Activated B cell treated with CpG ODN at 0.5 μM for 24 hours (primary cell): ENCODE measurements at regions of chr3 and their contacts with region 1.

Region 1: DNA sequence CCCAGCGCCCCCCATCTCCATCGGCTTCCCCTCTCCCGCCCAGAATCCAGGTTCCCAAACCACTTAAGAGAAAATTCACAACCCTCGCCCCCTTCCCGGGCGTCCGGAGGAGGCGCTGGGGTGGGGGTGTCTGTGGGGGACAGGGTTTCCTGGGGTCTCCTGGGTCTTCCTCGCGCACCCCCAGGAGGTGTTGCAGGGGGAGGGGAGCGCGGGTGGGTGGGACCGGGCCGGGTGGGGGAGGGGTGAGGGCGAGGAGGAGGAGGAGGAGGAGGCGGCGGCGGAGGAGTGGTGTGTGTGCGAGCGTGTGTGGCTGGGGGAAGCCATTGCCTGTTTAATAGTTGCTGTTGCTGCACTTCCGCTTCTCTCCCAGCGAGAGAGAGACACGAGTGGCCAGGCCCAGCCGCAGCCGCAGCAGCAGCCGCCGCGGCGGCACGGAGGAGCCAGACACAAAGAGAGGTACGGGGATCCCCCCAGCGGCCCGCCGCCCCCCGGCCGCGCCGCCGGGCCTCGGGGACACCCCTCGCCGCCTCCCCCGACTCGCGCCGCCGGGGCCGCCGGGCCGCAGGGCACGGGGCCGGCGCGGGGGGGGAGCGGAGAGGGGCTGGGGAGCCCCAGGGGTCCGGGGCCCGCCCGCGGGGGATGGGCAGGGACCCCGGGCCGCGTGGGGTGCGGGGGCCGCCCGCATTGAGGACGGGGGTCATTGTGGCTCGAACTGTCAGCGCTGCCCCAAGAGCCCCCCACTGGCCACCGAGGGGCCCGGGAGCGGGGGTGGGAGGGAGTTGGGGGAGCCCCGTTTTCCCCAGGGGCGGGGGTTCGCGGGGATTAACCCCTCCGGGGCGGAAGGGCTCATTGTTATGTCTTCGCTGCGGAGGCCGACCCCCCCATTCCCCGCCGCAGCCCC is at the start of gene UBE2E1:
- DNase-seq: peak; percentile 68
- ATAC-seq: peak; percentile 77
- H3K4me3 Mint-ChIP-seq: peak within 1 kb of the TSS; percentile 97
- H3K27ac Mint-ChIP-seq: peak within 1 kb of the TSS; percentile 97
- H3K4me1 Mint-ChIP-seq: peaks cover 41% of the 10 kb centered on the region
- H3K27me3 Mint-ChIP-seq: no peaks in the 10 kb centered on the region
- CTCF ChIP-seq: no peak
- total RNA-seq, gene UBE2E1: 79.9 and 85.2 TPM in 2 replicates

Region 2: GRCh38 chr3:22887664-22888291 is 918.1 kb before region 1 on chr3:
- CTCF ChIA-PET with region 1: no interaction called
- POLR2A ChIA-PET with region 1: no interaction called
- intact Hi-C with region 1: no loop called
- DNase-seq: no peak
- ATAC-seq: no peak
- H3K4me3 Mint-ChIP-seq: no peak overlapping the region
- H3K27ac Mint-ChIP-seq: no peak overlapping the region
- H3K4me1 Mint-ChIP-seq: no peaks in the 10 kb centered on the region
- H3K27me3 Mint-ChIP-seq: peaks cover 19% of the 10 kb centered on the region
- CTCF ChIP-seq: no peak

Region 3: GRCh38 chr3:23377928-23378672 is 427.8 kb before region 1 on chr3:
- CTCF ChIA-PET with region 1: no interaction called
- POLR2A ChIA-PET with region 1: interaction called, 16 read pairs
- intact Hi-C with region 1: no loop called
- DNase-seq: no peak
- ATAC-seq: no peak
- H3K4me3 Mint-ChIP-seq: peak overlapping the region; percentile 38
- H3K27ac Mint-ChIP-seq: no peak overlapping the region
- H3K4me1 Mint-ChIP-seq: peaks cover 63% of the 10 kb centered on the region
- H3K27me3 Mint-ChIP-seq: no peaks in the 10 kb centered on the region
- CTCF ChIP-seq: no peak

Region 4: DNA sequence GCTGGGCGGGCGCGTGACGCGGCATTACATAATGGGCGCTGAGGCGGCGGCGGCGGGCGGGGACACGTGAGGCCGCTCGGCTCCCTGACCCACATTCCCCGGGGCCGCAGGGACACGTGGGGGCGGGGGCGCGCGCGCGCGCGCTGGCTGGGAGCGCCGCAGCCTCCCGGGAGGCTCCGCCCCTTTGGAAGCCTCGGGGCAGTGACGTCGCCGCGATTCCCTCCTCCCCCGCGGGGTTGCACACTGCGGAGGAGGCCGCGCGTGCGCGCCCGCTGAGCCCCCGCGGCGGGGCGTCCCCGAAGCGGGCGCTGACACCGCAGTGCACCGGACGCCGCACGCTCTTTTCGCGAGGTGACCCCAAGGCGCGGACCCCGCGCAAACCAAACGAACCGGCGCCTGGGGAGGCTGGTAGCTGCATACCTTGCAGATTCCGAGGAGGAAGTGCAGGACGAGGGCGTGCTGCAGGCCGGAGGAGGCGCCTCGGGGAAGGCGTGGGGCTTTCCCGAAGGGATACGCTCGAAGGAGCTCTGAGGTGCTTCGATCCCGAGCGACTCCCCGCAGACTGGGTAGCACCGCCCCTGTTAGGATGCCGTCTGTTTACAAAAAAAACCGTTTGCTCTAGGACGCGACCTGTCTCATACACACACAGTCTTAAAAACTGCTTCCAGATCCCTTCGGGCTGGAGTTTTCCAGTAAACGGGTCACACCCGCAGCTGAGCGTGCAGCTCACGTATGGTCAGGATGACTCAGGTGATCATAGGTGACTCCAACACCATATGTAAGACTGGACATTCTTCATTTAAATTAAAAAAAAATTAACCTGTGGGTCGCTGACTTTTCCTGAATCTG is 140.2 kb after region 1 on chr3:
- CTCF ChIA-PET with region 1: no interaction called
- POLR2A ChIA-PET with region 1: interaction called, 3 read pairs
- intact Hi-C with region 1: loop called (anchors 1 kb)
- DNase-seq: peak; percentile 97
- ATAC-seq: peak; percentile 79
- H3K4me3 Mint-ChIP-seq: peak overlapping the region; percentile 86
- H3K27ac Mint-ChIP-seq: peak overlapping the region; percentile 94
- H3K4me1 Mint-ChIP-seq: peaks cover 44% of the 10 kb centered on the region
- H3K27me3 Mint-ChIP-seq: no peaks in the 10 kb centered on the region
- CTCF ChIP-seq: no peak